HEK293 (cell line): ENCODE measurements at regions of chr17 and their contacts with region 1.

Region 1: DNA sequence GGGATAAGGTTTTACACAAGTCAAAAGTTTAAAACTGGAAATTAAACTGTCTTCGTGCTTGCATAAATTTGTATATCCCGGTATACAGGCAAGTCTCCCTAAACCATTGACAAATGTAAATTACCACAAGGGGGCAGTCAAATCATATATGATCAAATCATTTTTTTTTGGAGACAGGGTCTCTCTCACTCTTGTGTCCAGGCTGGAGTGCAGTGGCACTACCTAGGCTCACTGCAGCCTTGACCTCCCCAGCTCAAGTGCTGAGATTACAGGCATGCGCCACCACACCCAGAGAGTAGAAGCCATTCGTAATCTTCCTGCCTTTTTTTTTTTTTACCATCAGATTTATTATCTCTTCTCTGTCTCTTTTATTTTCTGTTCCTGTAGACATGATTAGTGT is 18.5 kb downstream of the TOP2A start:
- H3K4me3 ChIP-seq: no peak overlapping the region
- H3K27ac ChIP-seq: no peak overlapping the region
- H3K4me1 ChIP-seq: no peaks in the 10 kb centered on the region
- CTCF ChIP-seq: no peak

Region 2: DNA sequence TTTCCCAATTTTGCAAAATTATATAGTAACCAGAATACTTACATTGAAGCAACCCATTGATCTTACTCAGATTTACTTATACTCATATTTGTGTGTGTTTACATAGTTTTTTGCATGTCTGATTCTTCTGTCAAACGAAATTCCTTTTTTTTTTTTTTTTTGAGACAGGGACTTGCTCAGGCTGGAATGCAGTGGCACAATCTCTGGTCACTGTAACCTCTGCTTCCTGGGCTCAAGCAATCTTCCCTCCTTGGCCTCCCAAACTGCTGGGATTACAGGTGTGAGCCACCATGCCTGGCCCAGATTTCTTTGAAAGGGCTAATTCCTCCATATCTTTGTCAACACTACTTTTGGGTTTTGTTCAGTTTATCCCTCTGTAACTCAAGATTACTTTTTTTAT is 11.5 kb before region 1 on chr17:
- CTCF ChIA-PET with region 1: interaction called, 11 read pairs
- POLR2A ChIA-PET with region 1: interaction called, 3 read pairs
- H3K4me3 ChIP-seq: no peak overlapping the region
- H3K27ac ChIP-seq: no peak overlapping the region
- H3K4me1 ChIP-seq: no peaks in the 10 kb centered on the region
- CTCF ChIP-seq: no peak

Region 3: DNA sequence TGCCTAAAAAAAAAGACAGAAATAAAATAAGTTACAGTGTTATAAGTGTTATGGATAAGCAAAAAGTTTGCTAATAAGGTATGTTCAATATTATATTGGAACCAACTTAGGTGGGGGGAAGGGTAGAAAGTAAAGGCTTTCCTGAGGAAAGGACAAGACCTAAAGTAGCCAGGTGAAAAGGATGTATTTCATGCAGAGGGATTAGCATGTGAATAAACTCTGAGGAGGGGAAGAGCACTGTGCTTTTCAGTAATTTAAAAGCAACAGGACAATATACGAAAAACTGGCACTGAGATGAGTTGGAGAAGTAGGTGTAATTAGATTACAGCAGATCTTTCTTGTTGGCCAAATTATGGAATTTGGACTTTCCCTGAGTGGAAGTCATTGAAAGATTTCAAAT is 10.9 kb after region 1 on chr17:
- CTCF ChIA-PET with region 1: interaction called, 13 read pairs
- POLR2A ChIA-PET with region 1: interaction called, 9 read pairs
- H3K4me3 ChIP-seq: no peak overlapping the region
- H3K27ac ChIP-seq: no peak overlapping the region
- H3K4me1 ChIP-seq: no peaks in the 10 kb centered on the region
- CTCF ChIP-seq: no peak

Region 4: GRCh38 chr17:40427002-40427491 is 27.9 kb after region 1 on chr17:
- CTCF ChIA-PET with region 1: no interaction called
- POLR2A ChIA-PET with region 1: no interaction called
- H3K4me3 ChIP-seq: no peak overlapping the region
- H3K27ac ChIP-seq: no peak overlapping the region
- H3K4me1 ChIP-seq: peaks cover 8% of the 10 kb centered on the region
- CTCF ChIP-seq: no peak